Activated CD8-positive, alpha-beta T cell treated with anti-CD3 and anti-CD28 coated beads for 36 hours (primary cell): ENCODE measurements at regions of chr7 and their contacts with region 1.

Region 1: GRCh38 chr7:7857143-7857583 is 111.4 kb upstream of the GLCCI1 start:
- DNase-seq: no peak
- ATAC-seq: no peak
- H3K4me3 Mint-ChIP-seq: no peak overlapping the region
- H3K27ac Mint-ChIP-seq: no peak overlapping the region
- H3K4me1 Mint-ChIP-seq: peaks cover 14% of the 10 kb centered on the region
- H3K27me3 Mint-ChIP-seq: no peaks in the 10 kb centered on the region
- CTCF ChIP-seq: no peak

Region 2: GRCh38 chr7:7672545-7673239 is 184.5 kb before region 1 on chr7:
- CTCF ChIA-PET with region 1: no interaction called
- POLR2A ChIA-PET with region 1: no interaction called
- intact Hi-C with region 1: loop called (anchors 10 kb)
- DNase-seq: peak; percentile 43
- ATAC-seq: peak; percentile 86
- H3K4me3 Mint-ChIP-seq: peak overlapping the region; percentile 22
- H3K27ac Mint-ChIP-seq: peak overlapping the region; percentile 88
- H3K4me1 Mint-ChIP-seq: peaks cover 52% of the 10 kb centered on the region
- H3K27me3 Mint-ChIP-seq: no peaks in the 10 kb centered on the region
- CTCF ChIP-seq: no peak